Aorta (tissue), 5 donors: ENCODE measurements at regions of chr22 and their contacts with region 1.

Region 1: DNA sequence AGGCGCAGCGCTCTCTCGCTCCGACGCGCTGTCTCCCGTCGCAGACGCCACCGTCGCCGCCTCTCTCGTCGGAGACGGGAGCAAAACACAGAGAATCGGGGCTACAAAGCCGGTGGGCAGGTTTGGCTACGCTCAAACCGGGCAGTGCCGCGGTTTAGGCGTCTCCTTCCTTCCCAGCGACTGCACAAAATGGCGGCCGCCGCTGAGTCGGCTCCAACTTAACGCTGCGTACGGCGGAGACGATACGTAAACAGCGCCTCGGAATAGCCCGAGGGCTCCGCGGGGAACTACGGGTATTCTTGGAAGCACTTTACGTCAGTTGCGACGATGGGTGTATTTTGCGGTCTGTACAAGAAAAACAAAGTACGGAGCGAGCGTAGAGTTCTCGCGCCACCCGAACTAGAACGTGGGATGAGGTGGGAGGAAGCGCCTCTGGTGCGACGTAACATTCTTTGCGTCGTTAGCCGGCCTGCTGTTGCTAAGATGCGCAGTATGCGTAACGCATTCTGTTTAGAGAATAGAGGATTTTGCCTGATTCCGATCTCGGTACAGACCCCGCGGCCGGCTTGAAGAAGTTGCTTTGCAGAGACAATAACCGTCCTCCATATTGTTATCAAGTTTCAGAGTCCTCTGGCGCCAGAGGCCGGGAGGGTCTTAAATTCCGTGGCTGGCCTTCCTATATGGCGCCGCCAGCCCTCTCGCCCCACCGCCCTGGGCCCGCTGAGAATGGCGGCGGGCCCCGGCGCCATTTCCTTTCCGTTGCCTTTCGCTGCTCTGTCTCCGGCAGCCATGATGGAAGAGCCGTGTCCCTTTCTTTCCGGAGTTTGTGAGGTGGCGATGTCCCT is at the start of gene DDX17:
- DNase-seq: peak; percentile 95 to 97
- ATAC-seq: peak; percentile 97
- H3K4me3 ChIP-seq: peak within 1 kb of the TSS; percentile 59 to 76
- H3K27ac ChIP-seq: peak within 1 kb of the TSS; percentile 93 to 99
- H3K4me1 ChIP-seq: no peaks in the 10 kb centered on the region
- H3K27me3 ChIP-seq: no peaks in the 10 kb centered on the region
- total RNA-seq, gene DDX17: 377 to 555 TPM

Region 2: GRCh38 chr22:38467904-38468758 is 38.2 kb before region 1 on chr22 and contains the start of gene KDELR3:
- intact Hi-C with region 1: loop called in 1 of 2 experiments (anchors 5 kb)
- DNase-seq: peak; percentile 79 to 93
- ATAC-seq: peak; percentile 90
- H3K4me3 ChIP-seq: peak within 1 kb of the TSS; percentile 3 to 21
- H3K27ac ChIP-seq: no peak within 1 kb of the TSS
- H3K4me1 ChIP-seq: no peaks in the 10 kb centered on the region
- H3K27me3 ChIP-seq: no peaks in the 10 kb centered on the region
- total RNA-seq, gene KDELR3: 12.9 to 24.0 TPM

Region 3: DNA sequence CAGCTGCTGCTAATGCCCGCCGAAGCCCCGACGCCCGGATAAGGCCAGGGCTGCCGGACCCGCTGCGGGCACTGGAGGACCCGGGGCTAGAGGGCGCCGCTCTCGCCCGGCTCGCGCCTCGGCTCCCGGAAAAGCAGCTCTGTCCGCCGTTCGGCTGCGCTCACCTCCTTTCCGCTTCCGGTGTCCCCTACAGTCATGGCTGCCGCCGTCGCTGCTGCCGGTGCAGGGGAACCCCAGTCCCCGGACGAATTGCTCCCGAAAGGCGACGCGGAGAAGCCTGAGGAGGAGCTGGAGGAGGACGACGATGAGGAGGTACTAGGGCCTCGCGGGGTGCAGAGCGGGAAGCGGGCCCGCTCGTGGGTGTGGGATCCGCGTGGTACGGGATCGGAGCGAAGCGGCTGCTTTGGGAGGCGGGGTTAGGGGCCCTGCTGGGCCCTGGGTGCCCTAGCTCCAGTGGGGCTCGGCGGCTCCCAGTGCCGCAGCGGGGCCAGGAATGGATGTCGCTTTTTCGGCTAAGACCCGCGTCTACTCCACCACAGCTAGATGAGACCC is 175.5 kb after region 1 on chr22 and contains the start of gene TOMM22:
- intact Hi-C with region 1: loop called in 1 of 2 experiments (anchors 10 kb)
- DNase-seq: peak; percentile 92 to 96
- ATAC-seq: peak; percentile 98
- H3K4me3 ChIP-seq: peak within 1 kb of the TSS; percentile 52 to 83
- H3K27ac ChIP-seq: peak within 1 kb of the TSS in 1 of 2 donors; percentile 46
- H3K4me1 ChIP-seq: peaks cover 0 to 4% of the 10 kb centered on the region in 2 donors
- H3K27me3 ChIP-seq: no peaks in the 10 kb centered on the region
- total RNA-seq, gene TOMM22: 36.0 to 39.2 TPM